Spleen (tissue), 13 donors: ENCODE measurements at regions of chr10 and their contacts with region 1.

Region 1: DNA sequence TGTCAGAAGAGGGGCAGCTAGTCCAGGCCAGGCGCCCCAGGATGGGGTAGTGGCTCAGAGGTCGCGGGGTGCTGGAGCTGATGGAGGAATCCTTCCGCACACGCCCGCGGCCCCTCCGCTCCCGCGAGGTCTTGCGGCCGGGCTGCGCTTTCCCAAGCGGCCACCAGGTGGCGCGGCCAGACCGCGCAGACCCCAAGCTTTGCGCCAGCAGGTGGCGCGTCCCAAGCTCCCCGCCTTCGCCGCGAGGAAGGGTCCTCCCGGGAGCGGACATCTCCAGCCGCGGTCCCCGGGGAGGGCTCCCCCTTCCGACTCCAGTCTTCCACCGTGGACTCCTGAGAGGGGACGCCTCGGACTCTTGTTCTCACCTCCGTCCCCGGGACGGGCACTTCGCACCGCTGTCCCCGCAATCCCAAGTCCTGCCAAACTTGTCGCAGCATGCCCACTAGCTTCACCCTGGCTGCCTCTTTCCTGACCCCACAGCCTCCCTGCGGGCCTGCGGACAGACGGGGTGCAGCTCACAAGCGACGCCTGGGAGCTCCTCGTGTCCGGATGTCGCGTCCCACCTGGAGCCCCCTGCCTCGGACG is 19.4 kb downstream of the KCNK18 start:
- DNase-seq: peak; percentile 95
- H3K4me3 ChIP-seq: peak overlapping the region; percentile 20 to 71 (median 44)
- H3K27ac ChIP-seq: peak overlapping the region in 2 of 8 donors; percentile 23 to 65
- H3K4me1 ChIP-seq: peaks cover 7 to 30% (median 15%) of the 10 kb centered on the region in 6 donors
- H3K27me3 ChIP-seq: peaks cover 0 to 75% (median 26%) of the 10 kb centered on the region in 7 donors
- CTCF ChIP-seq: peak; percentile 95 to 100 (median 99)
- POLR2A ChIP-seq: no peak

Region 2: DNA sequence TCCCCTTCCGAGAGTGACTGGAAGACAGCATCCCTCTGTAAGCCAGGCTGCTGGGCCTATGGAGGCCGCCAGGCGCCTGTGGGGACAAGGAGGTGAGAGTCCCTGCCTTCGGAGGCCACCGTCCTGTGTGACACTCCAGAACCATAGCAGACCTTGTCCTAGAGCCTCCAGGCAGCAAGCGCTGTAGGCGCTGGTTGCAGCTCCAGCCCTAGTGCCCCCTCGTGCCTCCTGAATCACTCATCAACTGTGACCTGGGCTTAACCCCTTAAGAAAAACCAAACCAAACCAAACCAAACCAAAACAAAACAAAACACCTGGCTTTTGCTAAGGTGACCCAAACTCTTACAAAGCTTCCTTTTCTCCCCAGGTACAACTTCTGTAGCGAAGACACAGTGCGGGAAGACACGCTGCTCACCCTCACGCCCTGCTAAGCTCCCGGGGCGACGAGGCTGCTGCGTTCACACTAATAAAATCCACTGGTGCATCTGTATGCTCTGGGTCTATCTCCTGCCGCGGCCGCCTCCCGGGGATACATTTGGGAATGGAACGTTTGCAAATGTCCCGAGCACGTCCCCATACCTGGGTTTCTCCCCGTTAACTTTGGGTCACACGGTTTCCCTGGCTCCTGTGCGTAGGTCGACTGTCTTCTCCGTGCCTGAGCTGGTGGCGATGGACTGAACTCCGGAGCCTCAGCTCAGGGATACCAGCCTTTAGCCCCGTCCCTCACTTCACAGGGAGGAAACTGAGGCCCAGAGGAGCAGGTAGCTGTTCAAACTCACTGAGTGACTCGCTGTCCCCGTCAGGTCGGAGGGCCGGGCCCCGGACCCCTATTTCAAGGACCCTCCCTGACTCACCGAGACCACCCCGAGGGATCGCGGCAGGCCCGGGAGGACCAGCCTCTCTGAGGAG is 607.8 kb before region 1 on chr10:
- intact Hi-C with region 1: no loop called
- DNase-seq: no peak
- H3K4me3 ChIP-seq: peak overlapping the region in 3 of 8 donors; percentile 11 to 57 (median 31)
- H3K27ac ChIP-seq: no peak overlapping the region
- H3K4me1 ChIP-seq: no peaks in the 10 kb centered on the region
- H3K27me3 ChIP-seq: peaks cover 0 to 43% (median 9%) of the 10 kb centered on the region in 7 donors
- CTCF ChIP-seq: no peak
- POLR2A ChIP-seq: no peak

Region 3: GRCh38 chr10:117112220-117112619 is 104.5 kb before region 1 on chr10:
- intact Hi-C with region 1: no loop called
- DNase-seq: no peak
- H3K4me3 ChIP-seq: no peak overlapping the region
- H3K27ac ChIP-seq: no peak overlapping the region
- H3K4me1 ChIP-seq: no peaks in the 10 kb centered on the region
- H3K27me3 ChIP-seq: peaks cover 0 to 45% (median 0%) of the 10 kb centered on the region in 7 donors
- CTCF ChIP-seq: no peak
- POLR2A ChIP-seq: no peak

Region 4: GRCh38 chr10:117318909-117319308 is 102.2 kb after region 1 on chr10:
- intact Hi-C with region 1: loop called (anchors 10 kb)
- DNase-seq: no peak
- H3K4me3 ChIP-seq: no peak overlapping the region
- H3K27ac ChIP-seq: no peak overlapping the region
- H3K4me1 ChIP-seq: peaks cover 0 to 16% (median 8%) of the 10 kb centered on the region in 6 donors
- H3K27me3 ChIP-seq: no peaks in the 10 kb centered on the region
- CTCF ChIP-seq: peak in 2 of 11 experiments; percentile 19 to 23
- POLR2A ChIP-seq: no peak

Region 5: DNA sequence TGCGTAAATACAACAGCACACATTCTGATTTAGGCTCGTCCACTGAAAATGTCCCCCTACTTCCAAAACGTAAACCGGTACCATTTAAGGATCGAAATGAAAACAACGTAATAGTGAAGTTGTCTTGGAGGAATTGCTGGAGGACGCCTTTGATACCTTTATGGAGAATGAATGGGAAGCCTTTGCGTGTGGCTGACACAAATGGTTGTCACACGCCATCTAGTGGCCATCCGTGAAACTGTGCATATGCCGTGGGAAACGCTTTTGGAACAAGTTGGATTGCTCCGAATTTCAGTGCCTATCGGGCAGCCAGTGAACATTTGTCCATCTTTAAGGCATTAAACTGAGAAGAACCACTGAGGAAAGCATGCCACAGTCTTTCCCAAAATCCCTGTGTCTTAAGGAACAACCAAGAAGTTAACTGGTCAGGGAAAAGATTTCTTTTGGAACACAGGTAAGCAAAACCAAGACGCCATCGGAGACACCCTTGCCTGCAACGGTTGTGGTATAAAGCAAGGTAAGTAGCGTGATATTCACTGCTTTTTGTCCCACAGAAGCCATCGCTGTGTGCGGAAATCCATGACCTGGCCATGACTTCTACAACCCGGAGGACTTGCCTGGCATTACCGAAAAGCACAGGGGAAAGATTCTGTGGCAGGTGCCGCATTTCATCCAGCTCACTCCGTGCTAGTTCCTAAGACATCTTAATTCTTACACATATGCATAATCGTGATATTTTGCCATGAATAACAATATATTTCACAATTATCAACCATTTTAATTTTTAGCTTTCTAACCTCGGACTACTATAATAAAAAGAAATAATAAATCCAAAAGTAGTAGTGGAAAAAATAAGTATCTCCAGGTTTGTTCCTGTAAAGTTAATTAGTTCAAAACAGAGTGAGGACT is 1024.8 kb after region 1 on chr10:
- intact Hi-C with region 1: loop called (anchors 5 kb)
- DNase-seq: peak; percentile 80
- H3K4me3 ChIP-seq: no peak overlapping the region
- H3K27ac ChIP-seq: no peak overlapping the region
- H3K4me1 ChIP-seq: peaks cover 0 to 5% (median 0%) of the 10 kb centered on the region in 6 donors
- H3K27me3 ChIP-seq: peaks cover 3 to 90% (median 46%) of the 10 kb centered on the region in 7 donors
- CTCF ChIP-seq: peak; percentile 57 to 92 (median 84)
- POLR2A ChIP-seq: no peak